Transverse colon (tissue), 4 donors: ENCODE measurements at regions of chr3 and their contacts with region 1.

Region 1: GRCh38 chr3:18657858-18658820 is 233.0 kb upstream of the SATB1 start:
- DNase-seq: no peak
- H3K4me3 ChIP-seq: no peak overlapping the region
- H3K27ac ChIP-seq: no peak overlapping the region
- H3K4me1 ChIP-seq: no peaks in the 10 kb centered on the region
- H3K27me3 ChIP-seq: no peaks in the 10 kb centered on the region
- CTCF ChIP-seq: no peak
- EP300 ChIP-seq: no peak
- POLR2A ChIP-seq: no peak

Region 2: GRCh38 chr3:18643281-18643680 is 14.9 kb before region 1 on chr3:
- in situ Hi-C with region 1: no loop called
- intact Hi-C with region 1: loop called (anchors 1 kb)
- DNase-seq: no peak
- H3K4me3 ChIP-seq: no peak overlapping the region
- H3K27ac ChIP-seq: no peak overlapping the region
- H3K4me1 ChIP-seq: peaks cover 0 to 12% (median 3%) of the 10 kb centered on the region in 4 donors
- H3K27me3 ChIP-seq: no peaks in the 10 kb centered on the region
- CTCF ChIP-seq: no peak
- EP300 ChIP-seq: no peak
- POLR2A ChIP-seq: no peak